ENCODE measurements at regions of chr1 and their contacts with region 1.

Region 1: GRCh38 chr1:119209596-119210295 is 69.3 kb upstream of the WARS2 start:
- DNase-seq: no peak
- ATAC-seq: no peak
- H3K4me3 ChIP-seq: no peak overlapping the region
- H3K27ac ChIP-seq: no peak overlapping the region
- H3K4me1 ChIP-seq: no peaks in the 10 kb centered on the region
- H3K27me3 ChIP-seq: no peaks in the 10 kb centered on the region
- CTCF ChIP-seq: no peak
- POLR2A ChIP-seq: no peak
- RAD21 ChIP-seq: no peak

Region 2: GRCh38 chr1:119191325-119191724 is 18.4 kb before region 1 on chr1:
- CTCF ChIA-PET with region 1: no interaction called
- POLR2A ChIA-PET with region 1: no interaction called
- RAD21 ChIA-PET with region 1: no interaction called
- intact Hi-C with region 1: loop called (anchors 1 kb)
- DNase-seq: no peak
- ATAC-seq: no peak
- H3K4me3 ChIP-seq: no peak overlapping the region
- H3K27ac ChIP-seq: no peak overlapping the region
- H3K4me1 ChIP-seq: no peaks in the 10 kb centered on the region
- H3K27me3 ChIP-seq: no peaks in the 10 kb centered on the region
- CTCF ChIP-seq: no peak
- POLR2A ChIP-seq: no peak
- RAD21 ChIP-seq: no peak